ENCODE measurements at regions of chr20 and their contacts with region 1.

Region 1: DNA sequence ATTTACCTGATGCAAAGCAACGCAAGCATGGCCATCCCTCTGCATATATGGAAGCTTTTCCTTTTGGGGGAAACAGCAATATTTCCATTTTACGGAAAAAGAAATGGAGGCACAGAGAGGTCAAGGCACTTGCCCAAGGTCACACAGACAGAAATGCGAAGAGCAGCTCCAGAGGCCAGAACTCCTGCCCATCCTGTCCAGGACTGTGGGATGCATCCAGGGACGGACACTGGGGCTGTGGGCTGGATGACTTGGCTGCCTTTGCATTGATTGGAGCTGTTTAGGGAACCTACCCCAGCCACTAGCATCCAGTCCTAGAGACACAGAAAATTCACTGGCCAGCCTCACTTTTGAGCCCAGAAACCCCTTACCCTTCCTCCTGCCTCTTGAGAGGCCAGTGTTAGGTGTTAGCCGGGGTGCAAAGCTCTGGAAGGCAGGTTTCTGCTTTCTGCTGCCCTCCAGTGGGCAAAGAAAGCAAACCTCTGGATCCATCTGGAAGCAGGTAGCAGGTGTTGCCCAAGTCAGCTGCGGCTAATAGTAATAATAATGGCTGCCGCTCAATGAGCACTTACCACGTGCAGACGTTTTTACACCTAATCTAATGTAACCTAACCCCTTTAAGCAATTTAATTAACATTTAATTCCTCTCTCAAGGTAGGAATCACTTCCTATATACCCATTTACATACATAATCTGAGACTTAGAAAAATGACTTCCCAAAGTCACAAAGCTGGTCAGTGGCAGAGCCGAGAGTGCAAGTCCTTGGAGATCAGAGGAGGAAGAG is 31.7 kb upstream of the CCN5 start:
- DNase-seq: no peak

Region 2: DNA sequence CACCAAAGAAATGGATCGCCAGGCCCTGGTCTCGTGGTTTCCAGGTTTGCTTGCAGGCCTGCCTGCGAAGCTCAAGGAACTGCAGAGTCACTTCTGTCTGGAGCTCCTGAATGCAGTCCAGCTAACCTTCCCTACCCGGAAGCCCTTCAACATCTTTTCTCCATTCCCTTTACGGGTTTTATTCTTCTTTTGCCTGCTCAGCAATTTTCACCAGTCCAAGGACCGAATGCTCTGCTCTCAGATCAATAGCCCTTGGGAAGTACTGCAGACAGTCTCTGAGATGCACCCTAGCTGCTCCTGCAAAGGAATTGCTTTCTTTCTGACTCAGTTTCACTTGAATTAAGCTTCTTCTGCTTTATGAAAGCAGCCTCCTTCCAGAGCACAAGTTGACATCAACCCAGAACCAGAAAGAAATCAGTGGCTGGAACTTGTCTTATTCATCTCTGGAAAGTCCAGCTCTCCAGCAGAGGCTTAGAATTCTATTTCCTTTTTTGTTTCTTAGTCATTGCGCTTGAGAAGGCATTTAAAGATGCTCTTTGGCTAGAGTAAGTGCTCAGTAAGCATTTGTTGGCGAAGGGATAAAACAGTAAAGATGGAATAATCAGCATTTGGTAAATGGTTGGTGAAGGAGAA is 183.4 kb after region 1 on chr20:
- intact Hi-C with region 1: loop called (anchors 2 kb)
- DNase-seq: no peak

Measured in cardiac septum (tissue), 1 donor.